Psoas muscle (tissue), 8 donors: ENCODE measurements at regions of chr1 and their contacts with region 1.

Region 1: GRCh38 chr1:223845810-223846682 is at the start of gene TP53BP2:
- DNase-seq: peak; percentile 88 to 96
- ATAC-seq: peak; percentile 93 to 96 (median 94)
- H3K4me3 ChIP-seq: peak within 1 kb of the TSS; percentile 91
- H3K27ac ChIP-seq: peak within 1 kb of the TSS; percentile 100
- H3K4me1 ChIP-seq: peaks cover 41% of the 10 kb centered on the region
- H3K27me3 ChIP-seq: no peaks in the 10 kb centered on the region
- CTCF ChIP-seq: peak; percentile 71
- total RNA-seq, gene TP53BP2: 17.1 to 34.0 (median 25.8) TPM

Region 2: DNA sequence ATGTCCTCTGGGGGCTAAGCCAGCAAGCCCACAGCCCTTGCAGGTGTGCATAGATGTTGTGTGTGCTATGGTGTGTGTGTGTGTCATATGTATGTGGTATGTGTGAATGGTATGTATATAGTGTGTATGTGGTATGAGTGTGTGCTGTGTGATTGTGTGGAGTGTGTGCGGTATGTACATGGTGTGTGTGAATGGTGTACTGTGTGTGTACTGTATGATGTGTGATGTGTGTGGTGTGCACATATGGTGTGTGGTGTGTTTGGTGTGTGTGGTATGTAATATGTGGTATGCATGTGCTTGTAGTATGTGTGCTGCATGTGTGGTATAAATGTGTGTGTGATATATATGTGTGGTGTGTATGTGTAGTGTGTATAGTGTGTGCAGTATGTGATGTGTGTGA is 287.5 kb before region 1 on chr1:
- intact Hi-C with region 1: no loop called
- DNase-seq: no peak
- ATAC-seq: no peak
- H3K4me3 ChIP-seq: no peak overlapping the region
- H3K27ac ChIP-seq: no peak overlapping the region
- H3K4me1 ChIP-seq: no peaks in the 10 kb centered on the region
- H3K27me3 ChIP-seq: no peaks in the 10 kb centered on the region
- CTCF ChIP-seq: no peak

Region 3: DNA sequence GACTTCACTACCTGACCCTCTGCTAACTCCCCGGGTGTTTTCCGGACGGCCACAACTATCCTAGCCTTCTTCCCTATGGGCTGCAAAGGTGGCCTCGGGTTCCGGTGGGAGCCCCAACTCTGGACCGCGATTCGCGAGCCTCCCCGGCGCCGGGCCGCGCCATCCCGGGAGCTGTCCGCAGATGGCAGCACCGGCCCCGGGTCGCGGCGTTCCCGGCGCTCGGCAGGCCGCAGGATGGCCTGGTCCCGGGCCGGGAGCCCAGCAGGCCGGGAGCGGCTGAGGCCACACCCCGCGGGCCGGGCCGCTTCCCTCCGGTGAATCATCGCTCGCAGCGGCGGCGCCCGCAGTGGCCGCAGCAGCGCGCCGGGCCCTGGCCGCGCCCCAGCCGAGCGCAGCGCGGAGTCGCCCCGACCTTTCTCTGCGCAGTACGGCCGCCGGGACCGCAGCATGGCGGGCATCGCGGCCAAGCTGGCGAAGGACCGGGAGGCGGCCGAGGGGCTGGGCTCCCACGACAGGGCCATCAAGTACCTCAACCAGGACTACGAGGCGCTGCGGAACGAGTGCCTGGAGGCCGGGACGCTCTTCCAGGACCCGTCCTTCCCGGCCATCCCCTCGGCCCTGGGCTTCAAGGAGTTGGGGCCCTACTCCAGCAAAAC is 133.7 kb before region 1 on chr1 and contains the start of gene CAPN2:
- intact Hi-C with region 1: loop called in 1 of 2 experiments (anchors 1 kb)
- DNase-seq: peak; percentile 91 to 94
- ATAC-seq: peak; percentile 93 to 94 (median 94)
- H3K4me3 ChIP-seq: peak within 1 kb of the TSS; percentile 89
- H3K27ac ChIP-seq: peak within 1 kb of the TSS; percentile 96
- H3K4me1 ChIP-seq: peaks cover 48% of the 10 kb centered on the region
- H3K27me3 ChIP-seq: no peaks in the 10 kb centered on the region
- CTCF ChIP-seq: peak; percentile 81
- total RNA-seq, gene CAPN2: 77.1 to 151 (median 105) TPM

Region 4: GRCh38 chr1:223811634-223812415 is 34.2 kb before region 1 on chr1:
- intact Hi-C with region 1: loop called (anchors 5 kb)
- DNase-seq: no peak
- ATAC-seq: peak; percentile 52 to 85 (median 72)
- H3K4me3 ChIP-seq: no peak overlapping the region
- H3K27ac ChIP-seq: no peak overlapping the region
- H3K4me1 ChIP-seq: peaks cover 29% of the 10 kb centered on the region
- H3K27me3 ChIP-seq: no peaks in the 10 kb centered on the region
- CTCF ChIP-seq: peak; percentile 66

Region 5: GRCh38 chr1:223887747-223888418 is 41.8 kb after region 1 on chr1:
- intact Hi-C with region 1: loop called (anchors 2 to 5 kb)
- DNase-seq: peak; percentile 47 to 63
- ATAC-seq: peak; percentile 93 to 97 (median 94)
- H3K4me3 ChIP-seq: peak overlapping the region; percentile 33
- H3K27ac ChIP-seq: peak overlapping the region; percentile 95
- H3K4me1 ChIP-seq: peaks cover 6% of the 10 kb centered on the region
- H3K27me3 ChIP-seq: no peaks in the 10 kb centered on the region
- CTCF ChIP-seq: no peak

Region 6: DNA sequence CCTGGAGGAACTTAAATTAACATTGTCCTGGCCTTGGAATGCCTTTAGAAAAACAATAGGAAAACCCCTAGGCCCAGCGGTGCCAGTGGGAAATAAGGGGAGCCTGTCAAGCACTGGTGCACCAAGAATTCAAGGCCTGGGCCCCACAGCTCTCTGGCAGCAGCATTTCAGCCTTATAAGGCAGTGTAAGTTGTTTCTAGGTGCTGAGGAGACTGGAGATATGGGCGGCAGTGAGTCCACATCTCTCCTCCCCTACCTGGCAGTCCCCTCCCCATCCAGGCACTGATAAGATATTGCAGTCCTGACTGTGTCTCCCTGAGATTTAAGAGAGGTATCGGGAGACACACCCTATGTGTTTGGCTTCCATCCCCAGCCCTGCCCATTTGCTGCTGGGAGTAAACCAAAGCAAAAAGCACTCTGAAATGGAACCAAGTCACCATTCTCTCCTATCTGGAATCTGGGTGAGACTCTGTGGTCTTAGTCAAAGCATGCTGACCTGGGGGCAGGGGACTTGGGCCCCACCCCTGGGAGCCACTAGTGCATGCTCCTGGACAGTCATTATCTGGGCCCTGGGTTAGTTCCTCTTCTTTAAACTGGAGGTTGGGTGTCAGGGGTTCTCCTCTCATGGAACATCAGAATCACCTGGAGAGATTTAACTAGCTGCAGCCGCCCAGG is 367.5 kb after region 1 on chr1:
- intact Hi-C with region 1: no loop called
- DNase-seq: no peak
- ATAC-seq: no peak
- H3K4me3 ChIP-seq: no peak overlapping the region
- H3K27ac ChIP-seq: no peak overlapping the region
- H3K4me1 ChIP-seq: peaks cover 9% of the 10 kb centered on the region
- H3K27me3 ChIP-seq: no peaks in the 10 kb centered on the region
- CTCF ChIP-seq: no peak